PC-9 (cell line): ENCODE measurements at regions of chr3 and their contacts with region 1.

Region 1: GRCh38 chr3:50983887-50984286 is 309.2 kb downstream of the DOCK3 start:
- DNase-seq: no peak
- H3K4me3 ChIP-seq: no peak overlapping the region
- H3K27ac ChIP-seq: no peak overlapping the region
- H3K4me1 ChIP-seq: no peaks in the 10 kb centered on the region
- H3K27me3 ChIP-seq: no peaks in the 10 kb centered on the region
- CTCF ChIP-seq: no peak

Region 2: DNA sequence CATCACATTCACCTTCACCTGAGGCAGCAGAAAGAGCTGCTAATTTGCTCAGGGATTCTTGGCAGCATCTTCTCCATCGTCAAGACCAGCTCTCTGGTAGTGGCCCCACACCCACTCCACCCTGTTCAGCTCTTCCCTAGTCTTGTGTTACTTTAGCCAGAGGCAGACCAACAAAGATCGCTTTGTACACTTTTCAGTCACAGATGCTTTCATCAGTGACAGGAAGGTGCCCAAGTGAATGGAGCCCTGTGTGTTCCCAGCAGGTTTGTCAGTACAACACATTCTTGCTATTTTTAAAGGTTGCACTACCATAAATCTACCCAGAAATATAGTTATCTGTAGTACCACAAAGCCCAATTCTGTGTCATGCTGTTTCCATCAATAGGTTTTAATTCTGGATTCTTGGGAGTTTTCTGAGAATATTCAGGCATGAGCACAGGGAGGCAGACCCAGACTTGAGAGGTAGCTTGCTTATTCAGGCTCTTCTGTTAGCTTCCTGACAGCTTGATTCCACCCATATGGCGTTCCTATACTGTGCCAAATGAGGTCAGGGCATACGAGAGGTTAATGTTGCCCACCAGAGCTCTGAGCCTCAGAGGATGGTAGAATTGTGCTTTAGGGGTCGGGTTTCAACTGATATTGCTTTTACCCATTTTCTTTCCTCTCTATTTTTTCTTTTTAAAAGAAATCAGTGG is 291.4 kb after region 1 on chr3:
- CTCF ChIA-PET with region 1: no interaction called
- POLR2A ChIA-PET with region 1: no interaction called
- intact Hi-C with region 1: loop called (anchors 2 kb)
- DNase-seq: no peak
- H3K4me3 ChIP-seq: no peak overlapping the region
- H3K27ac ChIP-seq: no peak overlapping the region
- H3K4me1 ChIP-seq: no peaks in the 10 kb centered on the region
- H3K27me3 ChIP-seq: no peaks in the 10 kb centered on the region
- CTCF ChIP-seq: no peak